B cell (primary cell): ENCODE measurements at regions of chr6 and their contacts with region 1.

Region 1: GRCh38 chr6:135451693-135452092 is 45.8 kb downstream of the AHI1 start:
- DNase-seq: peak; percentile 67
- ATAC-seq: no peak
- H3K4me3 ChIP-seq: no peak overlapping the region
- H3K4me3 Mint-ChIP-seq: no peak overlapping the region
- H3K27ac ChIP-seq: no peak overlapping the region
- H3K27ac Mint-ChIP-seq: no peak overlapping the region
- H3K4me1 ChIP-seq: peaks cover 3 to 8% of the 10 kb centered on the region in 2 donors
- H3K4me1 Mint-ChIP-seq: peaks cover 9% of the 10 kb centered on the region
- H3K27me3 ChIP-seq: no peaks in the 10 kb centered on the region
- H3K27me3 Mint-ChIP-seq: no peaks in the 10 kb centered on the region
- CTCF ChIP-seq: peak; percentile 86

Region 2: DNA sequence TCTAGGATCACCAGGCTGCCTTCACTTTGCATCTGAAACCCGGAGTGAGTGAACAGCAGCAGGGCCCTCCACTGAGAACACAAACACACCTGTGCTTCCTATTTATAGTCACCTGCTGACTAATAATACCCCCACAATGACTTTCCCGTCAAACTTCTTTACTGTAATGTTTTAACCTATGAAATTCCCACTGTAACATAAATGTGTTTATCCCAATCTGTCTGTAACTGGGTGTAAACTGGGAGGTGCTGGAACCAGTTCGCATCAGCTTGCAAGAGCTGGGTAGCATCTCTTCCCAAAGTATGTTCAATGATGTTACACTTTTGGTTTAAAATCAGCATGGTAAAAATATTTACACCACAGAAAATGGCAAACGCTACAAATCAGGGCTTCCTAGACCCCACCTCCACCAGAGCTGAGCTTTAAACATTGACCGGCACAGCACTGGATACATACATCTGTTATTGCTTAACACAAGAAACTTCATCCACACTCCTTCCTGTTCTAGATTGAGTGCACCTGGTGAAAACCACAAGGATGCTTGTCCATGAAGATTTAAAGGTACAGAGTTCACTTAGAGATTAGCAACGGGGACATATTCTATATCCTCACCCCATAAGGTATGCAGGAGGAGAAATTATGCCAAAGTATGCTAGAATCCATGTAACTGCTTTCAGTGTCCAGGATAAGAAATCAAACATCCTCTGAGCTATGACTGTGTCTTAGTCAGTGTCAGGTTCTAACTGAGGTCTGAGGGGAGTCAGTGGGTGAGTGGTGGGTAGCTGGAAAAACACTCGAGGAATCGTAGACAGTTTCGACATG is 580.8 kb before region 1 on chr6:
- CTCF ChIA-PET with region 1: no interaction called
- POLR2A ChIA-PET with region 1: no interaction called
- intact Hi-C with region 1: no loop called
- DNase-seq: no peak
- ATAC-seq: no peak
- H3K4me3 ChIP-seq: no peak overlapping the region
- H3K4me3 Mint-ChIP-seq: no peak overlapping the region
- H3K27ac ChIP-seq: no peak overlapping the region
- H3K27ac Mint-ChIP-seq: no peak overlapping the region
- H3K4me1 ChIP-seq: peaks cover 8 to 19% of the 10 kb centered on the region in 2 donors
- H3K4me1 Mint-ChIP-seq: peaks cover 25% of the 10 kb centered on the region
- H3K27me3 ChIP-seq: no peaks in the 10 kb centered on the region
- H3K27me3 Mint-ChIP-seq: peaks cover 3% of the 10 kb centered on the region
- CTCF ChIP-seq: no peak

Region 3: DNA sequence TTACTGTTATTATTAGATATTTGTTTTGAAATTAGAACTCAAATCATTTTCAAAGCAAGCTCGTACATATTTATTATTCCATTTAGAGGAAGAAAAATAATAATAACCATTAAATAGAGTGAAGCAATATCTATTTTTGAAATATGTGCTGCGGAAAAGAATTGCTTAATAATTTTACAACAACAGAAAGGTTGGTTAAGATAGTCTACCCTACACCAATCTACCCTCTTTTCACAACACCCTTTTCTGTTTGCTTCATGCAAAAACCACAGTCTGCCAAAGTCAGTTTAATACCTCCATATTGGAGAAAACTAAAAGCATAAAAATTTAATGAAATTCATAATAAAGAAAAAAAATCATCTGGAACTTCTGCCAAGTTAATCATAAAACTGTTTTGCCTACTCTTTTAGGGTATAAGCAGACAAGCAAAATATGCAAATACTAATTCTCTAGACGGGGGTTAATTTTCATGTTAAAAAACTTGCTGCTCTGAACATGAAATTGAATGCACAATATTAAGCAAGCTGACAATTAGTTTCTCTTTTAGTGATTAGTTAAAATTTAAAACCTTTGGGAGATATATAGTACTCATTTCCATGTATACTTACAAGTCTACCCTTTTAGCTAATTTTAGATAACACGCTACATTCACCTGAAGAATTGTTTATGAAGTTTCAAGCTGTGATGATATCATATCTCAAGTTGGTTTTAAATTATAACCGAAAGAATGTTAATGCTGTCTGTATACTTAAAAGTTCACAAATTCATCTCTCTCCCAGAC is 54.3 kb before region 1 on chr6:
- CTCF ChIA-PET with region 1: no interaction called
- POLR2A ChIA-PET with region 1: no interaction called
- intact Hi-C with region 1: no loop called
- DNase-seq: no peak
- ATAC-seq: no peak
- H3K4me3 ChIP-seq: no peak overlapping the region
- H3K4me3 Mint-ChIP-seq: no peak overlapping the region
- H3K27ac ChIP-seq: no peak overlapping the region
- H3K27ac Mint-ChIP-seq: no peak overlapping the region
- H3K4me1 ChIP-seq: no peaks in the 10 kb centered on the region
- H3K4me1 Mint-ChIP-seq: no peaks in the 10 kb centered on the region
- H3K27me3 ChIP-seq: no peaks in the 10 kb centered on the region
- H3K27me3 Mint-ChIP-seq: no peaks in the 10 kb centered on the region
- CTCF ChIP-seq: no peak

Region 4: GRCh38 chr6:135465307-135465706 is 13.6 kb after region 1 on chr6:
- CTCF ChIA-PET with region 1: interaction called, 10 read pairs
- POLR2A ChIA-PET with region 1: no interaction called
- intact Hi-C with region 1: no loop called
- DNase-seq: peak; percentile 49
- ATAC-seq: peak; percentile 53
- H3K4me3 ChIP-seq: no peak overlapping the region
- H3K4me3 Mint-ChIP-seq: no peak overlapping the region
- H3K27ac ChIP-seq: no peak overlapping the region
- H3K27ac Mint-ChIP-seq: no peak overlapping the region
- H3K4me1 ChIP-seq: peaks cover 9 to 18% of the 10 kb centered on the region in 2 donors
- H3K4me1 Mint-ChIP-seq: peaks cover 11% of the 10 kb centered on the region
- H3K27me3 ChIP-seq: no peaks in the 10 kb centered on the region
- H3K27me3 Mint-ChIP-seq: no peaks in the 10 kb centered on the region
- CTCF ChIP-seq: no peak

Region 5: GRCh38 chr6:135506270-135506997 is 54.7 kb after region 1 on chr6:
- CTCF ChIA-PET with region 1: interaction called, 21 read pairs
- POLR2A ChIA-PET with region 1: no interaction called
- intact Hi-C with region 1: no loop called
- DNase-seq: peak; percentile 58
- ATAC-seq: peak; percentile 67
- H3K4me3 ChIP-seq: no peak overlapping the region
- H3K4me3 Mint-ChIP-seq: no peak overlapping the region
- H3K27ac ChIP-seq: no peak overlapping the region
- H3K27ac Mint-ChIP-seq: no peak overlapping the region
- H3K4me1 ChIP-seq: no peaks in the 10 kb centered on the region
- H3K4me1 Mint-ChIP-seq: peaks cover 2% of the 10 kb centered on the region
- H3K27me3 ChIP-seq: no peaks in the 10 kb centered on the region
- H3K27me3 Mint-ChIP-seq: no peaks in the 10 kb centered on the region
- CTCF ChIP-seq: peak; percentile 81

Region 6: DNA sequence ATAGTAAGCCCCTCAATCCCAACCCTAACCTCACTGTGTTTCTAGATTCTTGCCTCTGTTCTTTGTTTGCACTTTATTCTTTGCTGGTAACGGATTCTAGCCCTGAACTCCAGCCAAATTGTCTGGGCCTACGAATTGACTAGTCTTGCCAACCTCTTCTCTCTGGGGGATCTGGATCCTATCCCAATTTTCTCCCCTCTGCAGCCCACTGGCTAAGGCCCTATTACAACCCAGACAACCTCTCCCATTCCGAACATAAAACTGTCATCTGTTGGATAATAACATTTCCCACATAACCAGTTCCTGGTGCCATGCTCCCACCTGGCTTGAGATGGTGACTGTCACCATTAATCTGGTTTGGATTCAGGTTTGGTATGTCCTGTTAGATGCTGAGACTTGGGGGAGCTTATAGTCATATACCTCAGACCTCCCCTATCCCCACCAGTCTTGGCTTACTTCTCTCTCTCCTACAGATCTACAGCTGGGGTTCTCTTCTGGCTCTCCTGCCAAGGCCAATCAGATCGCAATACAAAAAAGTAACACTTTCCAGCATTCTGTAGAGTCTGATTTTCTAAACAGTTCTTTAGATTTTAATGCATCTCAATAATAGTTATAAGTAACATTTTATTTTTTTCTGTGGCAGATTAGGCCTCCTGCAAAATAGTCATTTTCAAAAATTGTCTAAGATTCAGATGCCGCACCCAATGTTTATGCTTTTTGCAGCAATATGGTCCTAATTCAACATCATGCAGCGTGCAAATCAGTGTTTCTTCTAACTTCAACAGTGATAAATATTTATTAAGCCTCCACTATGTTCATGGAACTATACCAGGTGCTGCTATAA is 75.6 kb after region 1 on chr6:
- CTCF ChIA-PET with region 1: no interaction called
- POLR2A ChIA-PET with region 1: no interaction called
- intact Hi-C with region 1: no loop called
- DNase-seq: no peak
- ATAC-seq: no peak
- H3K4me3 ChIP-seq: no peak overlapping the region
- H3K4me3 Mint-ChIP-seq: no peak overlapping the region
- H3K27ac ChIP-seq: no peak overlapping the region
- H3K27ac Mint-ChIP-seq: no peak overlapping the region
- H3K4me1 ChIP-seq: no peaks in the 10 kb centered on the region
- H3K4me1 Mint-ChIP-seq: no peaks in the 10 kb centered on the region
- H3K27me3 ChIP-seq: no peaks in the 10 kb centered on the region
- H3K27me3 Mint-ChIP-seq: no peaks in the 10 kb centered on the region
- CTCF ChIP-seq: no peak

Region 7: DNA sequence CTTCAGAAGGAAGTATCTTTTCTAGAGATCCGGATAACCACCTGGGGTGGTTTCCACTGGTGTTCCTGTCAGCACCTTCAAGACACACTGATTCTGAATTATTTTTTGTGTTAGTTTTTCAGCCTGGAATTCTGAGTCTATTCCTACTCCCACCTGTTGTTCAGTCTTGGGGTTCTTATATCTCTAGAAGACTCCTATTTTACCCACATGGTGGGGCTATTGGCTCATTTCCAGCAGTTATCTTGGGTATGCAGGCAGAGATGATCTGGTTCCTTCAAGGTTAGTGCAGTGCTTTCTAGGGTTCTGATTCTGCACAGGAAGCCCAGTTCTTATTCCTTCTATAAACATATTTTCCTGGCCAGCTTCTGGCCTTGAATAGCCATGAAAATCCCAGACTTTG is 224.2 kb after region 1 on chr6:
- CTCF ChIA-PET with region 1: interaction called, 9 read pairs
- POLR2A ChIA-PET with region 1: no interaction called
- intact Hi-C with region 1: loop called (anchors 5 kb)
- DNase-seq: peak; percentile 78
- ATAC-seq: peak; percentile 64
- H3K4me3 ChIP-seq: no peak overlapping the region
- H3K4me3 Mint-ChIP-seq: no peak overlapping the region
- H3K27ac ChIP-seq: no peak overlapping the region
- H3K27ac Mint-ChIP-seq: no peak overlapping the region
- H3K4me1 ChIP-seq: no peaks in the 10 kb centered on the region
- H3K4me1 Mint-ChIP-seq: no peaks in the 10 kb centered on the region
- H3K27me3 ChIP-seq: no peaks in the 10 kb centered on the region
- H3K27me3 Mint-ChIP-seq: no peaks in the 10 kb centered on the region
- CTCF ChIP-seq: peak; percentile 87

Region 8: GRCh38 chr6:136317021-136317694 is 865.5 kb after region 1 on chr6:
- CTCF ChIA-PET with region 1: interaction called, 6 read pairs
- POLR2A ChIA-PET with region 1: no interaction called
- intact Hi-C with region 1: loop called (anchors 1 kb)
- DNase-seq: peak; percentile 72
- ATAC-seq: peak; percentile 62
- H3K4me3 ChIP-seq: no peak overlapping the region
- H3K4me3 Mint-ChIP-seq: no peak overlapping the region
- H3K27ac ChIP-seq: no peak overlapping the region
- H3K27ac Mint-ChIP-seq: no peak overlapping the region
- H3K4me1 ChIP-seq: no peaks in the 10 kb centered on the region
- H3K4me1 Mint-ChIP-seq: no peaks in the 10 kb centered on the region
- H3K27me3 ChIP-seq: no peaks in the 10 kb centered on the region
- H3K27me3 Mint-ChIP-seq: peaks cover 7% of the 10 kb centered on the region
- CTCF ChIP-seq: peak; percentile 86